HCT116 (cell line): ENCODE measurements at regions of chr7 and their contacts with region 1.

Region 1: GRCh38 chr7:30938435-30939316 is 25.1 kb upstream of the GHRHR start:
- DNase-seq: peak; percentile 82
- ATAC-seq: peak; percentile 95
- H3K4me3 ChIP-seq: peak overlapping the region; percentile 19 to 46; a peak in 3 of 4 replicates
- H3K27ac ChIP-seq: no peak overlapping the region; the same call in 1 of the 2 replicates
- H3K4me1 ChIP-seq: peaks cover 3 to 12% of the 10 kb centered on the region in 2 experiments; a peak in 2 of 4 replicates
- H3K27me3 ChIP-seq: peaks cover 20% of the 10 kb centered on the region
- CTCF ChIP-seq: peak; percentile 87 to 94 (median 90)
- POLR2A ChIP-seq: no peak
- RAD21 ChIP-seq: peak; percentile 68

Region 2: GRCh38 chr7:30974605-30975255 is 36.1 kb after region 1 on chr7:
- CTCF ChIA-PET with region 1: interaction called, 11 read pairs
- POLR2A ChIA-PET with region 1: no interaction called
- RAD21 ChIA-PET with region 1: no interaction called
- intact Hi-C with region 1: loop called (anchors 2 kb)
- DNase-seq: peak; percentile 46
- ATAC-seq: peak; percentile 88
- H3K4me3 ChIP-seq: no peak overlapping the region
- H3K27ac ChIP-seq: no peak overlapping the region
- H3K4me1 ChIP-seq: peaks cover 0 to 7% of the 10 kb centered on the region in 2 experiments; a peak in 1 of 4 replicates
- H3K27me3 ChIP-seq: peaks cover 5% of the 10 kb centered on the region; the same call in 1 of the 2 replicates
- CTCF ChIP-seq: peak; percentile 72 to 89 (median 87)
- POLR2A ChIP-seq: no peak
- RAD21 ChIP-seq: peak; percentile 84

Region 3: DNA sequence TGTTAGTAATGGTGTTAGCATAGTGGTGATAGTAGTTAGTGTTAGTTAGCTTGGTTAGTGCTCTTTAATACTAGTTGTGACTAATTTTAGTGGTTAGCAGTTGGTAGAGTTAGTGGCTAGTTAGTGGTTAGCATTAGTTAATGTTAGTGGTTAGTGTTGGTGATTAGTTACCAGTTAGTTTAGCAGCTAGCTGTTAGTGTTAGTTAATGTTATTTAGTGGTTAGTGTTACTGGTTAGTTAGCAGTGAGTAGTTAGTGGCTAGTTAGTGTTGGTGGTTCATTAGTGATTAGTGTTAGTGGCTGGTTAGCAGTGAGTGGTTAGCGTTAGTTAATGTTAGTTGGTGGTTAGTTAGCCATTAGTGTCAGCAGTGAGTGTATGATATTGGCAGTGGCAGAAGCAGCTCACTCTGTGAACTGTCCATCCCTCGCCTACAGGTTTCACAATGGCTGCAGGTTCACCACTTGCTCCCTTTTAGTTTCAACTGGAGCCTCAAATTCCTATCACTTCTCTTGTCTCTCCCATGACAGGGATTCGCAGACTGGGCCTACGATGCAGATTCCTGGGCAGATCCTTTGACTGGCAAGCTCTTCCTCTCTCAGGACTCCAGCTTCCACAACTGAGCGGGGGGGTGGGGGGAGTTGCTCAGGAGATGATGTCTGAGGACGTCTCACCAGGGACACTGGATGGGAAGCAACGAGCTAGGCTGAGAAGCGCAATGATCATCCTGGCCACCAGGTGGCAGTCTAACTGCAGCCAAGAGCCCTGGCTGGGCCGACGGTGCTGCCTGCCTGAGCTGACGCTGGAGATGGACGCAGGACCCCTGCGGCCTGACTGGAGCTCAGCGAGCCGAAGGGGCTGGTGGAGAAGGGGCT is 44.6 kb after region 1 on chr7:
- CTCF ChIA-PET with region 1: interaction called, 19 read pairs
- POLR2A ChIA-PET with region 1: no interaction called
- RAD21 ChIA-PET with region 1: no interaction called
- intact Hi-C with region 1: no loop called
- DNase-seq: peak; percentile 70
- ATAC-seq: peak; percentile 98
- H3K4me3 ChIP-seq: no peak overlapping the region
- H3K27ac ChIP-seq: no peak overlapping the region
- H3K4me1 ChIP-seq: peaks cover 7 to 10% of the 10 kb centered on the region in 2 experiments; a peak in 3 of 4 replicates
- H3K27me3 ChIP-seq: peaks cover 14% of the 10 kb centered on the region
- CTCF ChIP-seq: peak; percentile 82 to 95 (median 90)
- POLR2A ChIP-seq: no peak
- RAD21 ChIP-seq: peak; percentile 94